HEK293 (cell line): ENCODE measurements at regions of chr19 and their contacts with region 1.

Region 1: GRCh38 chr19:36687214-36688056 is at the start of gene ZNF567:
- H3K4me3 ChIP-seq: peak within 1 kb of the TSS; percentile 61
- H3K27ac ChIP-seq: peak within 1 kb of the TSS; percentile 87
- H3K4me1 ChIP-seq: peaks cover 10% of the 10 kb centered on the region; the same call in 1 of the 2 replicates
- CTCF ChIP-seq: peak; percentile 68

Region 2: DNA sequence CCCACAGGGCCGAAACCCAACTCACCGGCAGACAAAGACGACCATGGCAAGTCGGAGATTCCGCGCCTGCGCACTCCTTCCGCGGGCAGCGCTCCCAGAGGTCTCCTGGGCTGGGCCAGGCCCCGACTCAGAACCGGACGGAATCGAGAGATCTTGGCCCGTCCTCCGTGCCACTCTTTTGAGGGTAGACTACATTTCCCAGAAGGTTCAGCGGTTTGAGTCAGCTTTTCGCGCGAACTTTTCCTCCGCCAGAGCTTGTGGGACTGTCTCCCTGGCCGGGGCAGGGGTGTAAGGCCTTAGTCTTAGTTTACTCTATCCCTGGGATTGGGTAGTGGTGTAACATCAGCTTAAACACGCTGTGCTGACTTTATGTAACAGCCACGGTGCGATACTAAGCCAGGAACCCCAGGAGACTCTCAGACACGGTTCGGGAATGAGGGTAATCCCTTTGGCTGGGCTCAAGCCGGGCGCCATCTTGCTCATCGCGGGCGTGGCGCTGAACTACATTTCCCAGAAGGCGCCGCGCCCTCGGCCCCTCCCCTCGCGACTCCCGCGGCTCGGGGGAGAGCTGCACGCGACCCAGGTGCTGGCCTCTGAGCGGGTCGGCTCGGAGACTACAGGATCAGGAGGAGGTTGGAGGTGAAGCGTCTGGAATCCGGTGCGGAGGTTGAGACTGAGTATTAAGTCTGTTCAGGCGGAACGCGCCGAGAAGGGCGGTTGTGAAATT is 159.1 kb before region 1 on chr19 and contains the start of gene ZNF260:
- CTCF ChIA-PET with region 1: no interaction called
- POLR2A ChIA-PET with region 1: interaction called, 13 read pairs
- H3K4me3 ChIP-seq: peak within 1 kb of the TSS; percentile 91
- H3K27ac ChIP-seq: peak within 1 kb of the TSS; percentile 96
- H3K4me1 ChIP-seq: peaks cover 8% of the 10 kb centered on the region; the same call in 1 of the 2 replicates
- CTCF ChIP-seq: peak; percentile 45; the same call in 1 of the 2 replicates

Region 3: GRCh38 chr19:36605101-36605876 is 82.1 kb before region 1 on chr19 and contains the start of gene ZNF382:
- CTCF ChIA-PET with region 1: no interaction called
- POLR2A ChIA-PET with region 1: interaction called, 10 read pairs
- H3K4me3 ChIP-seq: peak within 1 kb of the TSS; percentile 57
- H3K27ac ChIP-seq: peak within 1 kb of the TSS; percentile 98
- H3K4me1 ChIP-seq: peaks cover 6% of the 10 kb centered on the region
- CTCF ChIP-seq: no peak; the same call in none of the 2 replicates

Region 4: DNA sequence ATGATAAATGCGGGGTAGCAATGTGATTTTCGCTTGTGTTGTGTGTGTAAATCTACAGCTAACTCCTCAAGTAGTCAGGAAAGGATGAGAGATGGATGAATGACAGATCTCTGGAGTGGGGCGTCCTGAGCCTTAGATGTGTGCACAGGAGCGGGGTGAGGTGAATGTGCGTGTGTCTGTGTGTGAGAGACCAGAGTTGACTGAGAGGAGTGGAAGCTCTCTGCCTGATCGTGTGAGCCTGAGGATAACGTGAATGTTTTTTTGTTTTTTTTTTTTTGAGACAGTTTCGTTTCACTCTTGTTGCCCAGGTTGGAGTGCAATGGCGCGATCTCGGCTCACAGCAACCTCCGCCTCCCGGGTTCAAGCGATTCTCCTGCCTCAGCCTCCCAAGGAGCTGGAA is 21.6 kb before region 1 on chr19:
- CTCF ChIA-PET with region 1: interaction called, 4 read pairs
- POLR2A ChIA-PET with region 1: interaction called, 20 read pairs
- H3K4me3 ChIP-seq: peak overlapping the region; percentile 55
- H3K27ac ChIP-seq: peak overlapping the region; percentile 79; the same call in 1 of the 2 replicates
- H3K4me1 ChIP-seq: peaks cover 3% of the 10 kb centered on the region; the same call in 1 of the 2 replicates
- CTCF ChIP-seq: no peak